Heart right ventricle (tissue), 16 donors: ENCODE measurements at regions of chr19 and their contacts with region 1.

Region 1: GRCh38 chr19:11738746-11739620 is at the start of gene ZNF823:
- DNase-seq: peak; percentile 98 to 100
- ATAC-seq: peak; percentile 98 to 100 (median 100)
- H3K4me3 ChIP-seq: peak within 1 kb of the TSS; percentile 82 to 97 (median 92)
- H3K27ac ChIP-seq: peak within 1 kb of the TSS; percentile 78 to 97 (median 93)
- H3K4me1 ChIP-seq: peaks cover 0 to 31% (median 26%) of the 10 kb centered on the region in 9 donors
- H3K27me3 ChIP-seq: no peaks in the 10 kb centered on the region
- CTCF ChIP-seq: peak in 1 of 9 donors; percentile 3
- total RNA-seq, gene ZNF823: 2.2 to 5.7 (median 3.3) TPM

Region 2: GRCh38 chr19:11597202-11598102 is 141.5 kb before region 1 on chr19 and contains the start of gene ZNF627:
- intact Hi-C with region 1: loop called in 1 of 10 experiments (anchors 5 kb)
- DNase-seq: peak; percentile 98 to 100
- ATAC-seq: peak; percentile 99 to 100 (median 100)
- H3K4me3 ChIP-seq: peak within 1 kb of the TSS; percentile 78 to 100 (median 92)
- H3K27ac ChIP-seq: peak within 1 kb of the TSS; percentile 86 to 98 (median 92)
- H3K4me1 ChIP-seq: peaks cover 4 to 34% (median 19%) of the 10 kb centered on the region in 9 donors
- H3K27me3 ChIP-seq: no peaks in the 10 kb centered on the region
- CTCF ChIP-seq: peak in 6 of 9 donors; percentile 16 to 42 (median 32)
- total RNA-seq, gene ZNF627: 5.3 to 9.8 (median 6.7) TPM

Region 3: DNA sequence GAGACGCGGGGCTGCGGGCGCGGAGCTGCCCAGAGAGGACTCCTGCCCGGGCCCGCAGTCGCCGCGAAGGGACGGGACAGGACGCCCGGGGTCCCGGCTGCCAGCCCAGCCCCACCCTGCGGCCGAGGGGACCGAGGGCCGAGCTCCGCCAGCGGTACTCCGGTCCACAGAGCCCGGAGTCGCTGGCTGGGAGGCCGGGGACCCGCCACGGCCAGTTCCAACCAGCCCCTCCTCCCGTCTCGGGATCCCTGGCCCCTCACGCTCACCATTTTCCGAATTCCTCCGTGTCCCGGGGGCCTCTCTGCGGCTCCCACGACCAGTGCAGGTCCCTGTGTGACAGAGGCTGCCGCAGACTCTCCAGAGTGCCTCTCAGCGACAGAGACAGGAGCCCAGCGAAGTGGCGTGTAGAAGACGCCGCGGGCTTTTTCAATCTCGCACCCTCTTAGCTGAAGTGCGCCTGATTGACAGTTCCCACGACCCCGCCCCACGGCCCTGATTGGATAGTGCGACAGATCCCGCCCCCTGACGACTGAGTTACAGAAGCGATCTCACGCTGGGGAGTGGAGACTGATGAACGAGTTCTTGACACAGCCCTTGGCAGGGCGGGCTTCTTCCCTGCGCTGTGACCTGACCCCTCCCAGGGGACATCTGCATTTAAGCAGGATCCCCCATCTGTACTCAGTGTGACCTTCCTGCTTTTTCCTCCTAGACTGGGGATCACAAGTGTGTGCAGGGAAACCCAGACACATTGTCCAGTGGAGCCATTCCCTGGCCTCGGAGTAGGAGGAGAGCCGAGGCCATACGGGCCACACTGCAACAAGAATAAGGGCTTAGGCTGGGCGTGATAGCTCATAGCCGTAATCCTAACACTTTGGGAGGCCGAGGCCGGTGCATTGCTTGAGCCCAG is 44.2 kb before region 1 on chr19:
- intact Hi-C with region 1: loop called in 2 of 10 experiments (anchors 2 to 5 kb)
- DNase-seq: peak; percentile 96 to 97
- ATAC-seq: peak; percentile 99 to 100 (median 100)
- H3K4me3 ChIP-seq: peak overlapping the region; percentile 66 to 93 (median 77)
- H3K27ac ChIP-seq: peak overlapping the region in 9 of 10 donors; percentile 32 to 68 (median 54)
- H3K4me1 ChIP-seq: peaks cover 0 to 17% (median 10%) of the 10 kb centered on the region in 9 donors
- H3K27me3 ChIP-seq: no peaks in the 10 kb centered on the region
- CTCF ChIP-seq: no peak

Region 4: GRCh38 chr19:11766597-11767591 is 27.9 kb after region 1 on chr19 and contains the start of gene ZNF441:
- intact Hi-C with region 1: loop called in 5 of 10 experiments (anchors 1 to 2 kb)
- DNase-seq: peak; percentile 98
- ATAC-seq: peak; percentile 98 to 100 (median 99)
- H3K4me3 ChIP-seq: peak within 1 kb of the TSS; percentile 54 to 95 (median 84)
- H3K27ac ChIP-seq: peak within 1 kb of the TSS; percentile 82 to 97 (median 93)
- H3K4me1 ChIP-seq: peaks cover 3 to 20% (median 16%) of the 10 kb centered on the region in 9 donors
- H3K27me3 ChIP-seq: no peaks in the 10 kb centered on the region
- CTCF ChIP-seq: no peak
- total RNA-seq, gene ZNF441: 2.8 to 7.0 (median 5.2) TPM